ENCODE measurements at regions of chr15 and their contacts with region 1.

Region 1: GRCh38 chr15:59528965-59529402 is 82.6 kb upstream of the GCNT3 start:
- H3K4me3 Mint-ChIP-seq: no peak overlapping the region
- H3K27ac Mint-ChIP-seq: no peak overlapping the region
- H3K4me1 Mint-ChIP-seq: peaks cover 47% of the 10 kb centered on the region
- H3K27me3 Mint-ChIP-seq: no peaks in the 10 kb centered on the region

Region 2: DNA sequence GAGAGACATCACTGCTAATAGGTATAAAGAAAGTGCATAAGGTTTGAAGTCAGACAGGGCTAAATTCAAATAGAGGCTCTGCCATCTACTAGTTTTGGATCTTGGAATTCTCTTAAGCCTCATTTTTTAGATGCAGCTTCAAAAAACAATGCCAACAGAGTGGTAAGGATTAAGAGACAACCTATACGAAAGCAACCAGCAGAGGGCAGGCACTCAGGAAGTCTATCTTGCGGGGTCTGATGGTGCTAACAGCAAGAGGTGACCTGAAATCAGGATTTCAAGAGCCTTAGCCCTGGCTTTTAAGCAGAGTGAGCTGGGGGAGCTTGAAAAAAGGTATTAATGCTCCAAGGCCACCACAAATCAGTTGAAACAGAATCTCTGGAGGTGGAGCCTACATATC is 281.6 kb before region 1 on chr15:
- intact Hi-C with region 1: loop called (anchors 1 kb)
- H3K4me3 Mint-ChIP-seq: no peak overlapping the region
- H3K27ac Mint-ChIP-seq: no peak overlapping the region
- H3K4me1 Mint-ChIP-seq: peaks cover 5% of the 10 kb centered on the region
- H3K27me3 Mint-ChIP-seq: no peaks in the 10 kb centered on the region

Region 3: DNA sequence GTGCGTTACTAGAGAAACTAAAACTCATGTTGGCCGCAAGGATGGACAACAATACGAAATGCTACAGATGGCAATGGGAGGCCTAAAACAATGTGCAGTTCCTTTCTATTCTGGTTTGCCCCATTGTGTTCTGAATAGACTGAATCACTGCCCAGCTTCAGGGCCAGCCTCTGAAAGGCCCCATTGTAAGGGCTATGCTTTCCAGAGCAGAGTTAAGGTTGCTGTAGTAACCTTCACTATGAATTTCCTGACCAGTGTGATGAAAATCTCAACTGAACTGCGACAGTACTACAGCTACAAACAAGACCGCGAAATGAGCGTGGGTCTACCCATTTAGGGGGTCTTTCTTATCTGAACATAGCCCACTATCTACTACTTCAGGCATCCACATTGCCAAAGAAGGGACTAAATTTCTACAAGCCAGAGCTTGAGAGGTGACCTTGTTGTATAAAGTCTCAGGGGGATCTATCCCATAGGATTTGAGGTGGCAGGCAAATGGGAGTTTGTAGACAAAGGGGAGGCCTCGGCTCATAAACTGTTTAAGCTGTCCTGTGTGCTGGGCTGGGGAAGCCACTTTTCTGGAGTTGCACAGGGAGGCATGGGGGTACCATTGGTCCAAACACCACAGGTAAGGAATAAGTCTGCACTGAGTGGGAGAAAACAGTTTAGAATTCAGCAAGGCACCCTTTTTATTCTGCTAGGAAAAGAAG is 236.4 kb before region 1 on chr15:
- intact Hi-C with region 1: no loop called
- H3K4me3 Mint-ChIP-seq: no peak overlapping the region
- H3K27ac Mint-ChIP-seq: no peak overlapping the region
- H3K4me1 Mint-ChIP-seq: peaks cover 60% of the 10 kb centered on the region
- H3K27me3 Mint-ChIP-seq: no peaks in the 10 kb centered on the region

Region 4: GRCh38 chr15:59473226-59473625 is 55.8 kb before region 1 on chr15:
- intact Hi-C with region 1: no loop called
- H3K4me3 Mint-ChIP-seq: no peak overlapping the region
- H3K27ac Mint-ChIP-seq: no peak overlapping the region
- H3K4me1 Mint-ChIP-seq: peaks cover 15% of the 10 kb centered on the region
- H3K27me3 Mint-ChIP-seq: no peaks in the 10 kb centered on the region

Region 5: GRCh38 chr15:59562448-59563186 is 33.6 kb after region 1 on chr15:
- intact Hi-C with region 1: loop called (anchors 2 kb)
- H3K4me3 Mint-ChIP-seq: no peak overlapping the region
- H3K27ac Mint-ChIP-seq: no peak overlapping the region
- H3K4me1 Mint-ChIP-seq: peaks cover 16% of the 10 kb centered on the region
- H3K27me3 Mint-ChIP-seq: peaks cover 3% of the 10 kb centered on the region

Region 6: DNA sequence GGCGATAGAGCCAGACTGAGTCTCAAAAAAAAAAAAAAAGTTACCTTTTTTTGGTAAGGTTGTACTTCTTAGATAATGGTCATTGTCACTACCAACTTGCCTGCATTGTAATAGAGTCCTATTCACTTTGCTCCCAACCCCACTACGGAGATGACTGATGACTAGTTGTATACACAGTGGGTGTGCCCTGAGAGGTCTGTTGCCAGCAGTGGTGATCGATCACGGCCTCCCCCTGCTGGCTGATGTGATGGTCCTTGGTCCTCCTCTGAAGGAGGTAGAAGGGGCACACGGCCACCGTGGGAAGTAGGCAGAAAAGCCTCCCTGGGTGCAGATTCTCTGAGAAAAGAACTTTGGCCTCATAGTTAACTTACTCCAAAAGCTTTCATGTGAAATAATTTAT is 93.3 kb after region 1 on chr15:
- intact Hi-C with region 1: loop called (anchors 5 kb)
- H3K4me3 Mint-ChIP-seq: no peak overlapping the region
- H3K27ac Mint-ChIP-seq: no peak overlapping the region
- H3K4me1 Mint-ChIP-seq: peaks cover 11% of the 10 kb centered on the region
- H3K27me3 Mint-ChIP-seq: peaks cover 19% of the 10 kb centered on the region

Region 7: DNA sequence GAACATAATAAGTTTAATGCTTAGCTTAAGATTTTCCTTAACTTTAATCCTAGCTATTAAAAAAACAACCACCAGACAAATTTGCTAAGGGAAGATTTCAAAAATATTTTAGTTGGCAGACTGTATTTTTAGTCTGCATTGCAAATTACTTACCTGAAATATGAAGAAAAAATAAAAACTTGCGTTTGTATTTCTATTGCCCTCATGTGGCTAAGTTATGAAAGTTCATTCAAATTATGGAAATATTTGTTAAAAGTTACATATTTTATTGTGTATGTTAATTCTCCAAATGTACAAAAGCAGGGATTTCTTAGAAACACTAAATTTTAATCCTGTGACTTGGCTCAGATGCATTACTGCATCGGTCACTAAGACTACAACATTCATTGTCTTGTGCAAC is 113.4 kb after region 1 on chr15:
- intact Hi-C with region 1: loop called (anchors 5 kb)
- H3K4me3 Mint-ChIP-seq: no peak overlapping the region
- H3K27ac Mint-ChIP-seq: no peak overlapping the region
- H3K4me1 Mint-ChIP-seq: peaks cover 9% of the 10 kb centered on the region
- H3K27me3 Mint-ChIP-seq: no peaks in the 10 kb centered on the region

Region 8: DNA sequence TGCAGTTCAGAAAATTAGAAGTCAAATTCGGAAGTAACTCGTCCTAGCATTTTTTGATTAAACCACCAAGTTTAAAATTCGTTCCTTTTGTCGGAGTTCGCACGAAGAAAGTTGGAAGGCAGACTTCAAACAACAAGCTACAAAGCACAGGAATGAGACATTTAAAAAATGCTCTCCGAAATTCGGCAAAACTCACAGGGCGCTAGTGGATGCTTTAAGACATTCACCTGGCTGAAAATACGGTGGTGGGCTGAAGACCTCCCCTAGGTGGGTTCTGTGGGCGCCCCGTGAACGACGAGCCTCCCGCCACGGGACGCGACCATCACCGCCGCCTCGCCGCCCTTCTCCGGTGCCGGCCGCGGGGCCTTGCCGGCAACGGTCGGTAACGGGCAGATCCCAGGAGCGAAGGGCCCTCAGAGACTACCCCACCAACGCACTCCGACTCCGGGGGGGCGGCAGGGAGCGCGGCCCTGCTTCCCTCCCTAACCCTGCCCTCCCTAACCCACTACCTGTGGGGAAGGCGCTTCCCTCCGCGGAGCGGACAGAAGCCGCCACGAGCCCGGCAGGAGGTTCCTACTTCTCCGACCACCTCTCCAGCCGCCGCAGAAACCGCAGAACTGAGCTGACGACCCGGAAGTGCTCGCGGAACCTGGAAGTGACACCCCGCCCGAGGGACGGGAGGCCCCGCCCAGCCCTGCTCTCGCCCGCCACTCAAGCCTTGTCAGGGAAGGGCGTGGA is 128.1 kb after region 1 on chr15 and contains the start of gene GTF2A2:
- intact Hi-C with region 1: loop called (anchors 5 kb)
- H3K4me3 Mint-ChIP-seq: no peak within 1 kb of the TSS
- H3K27ac Mint-ChIP-seq: no peak within 1 kb of the TSS
- H3K4me1 Mint-ChIP-seq: peaks cover 11% of the 10 kb centered on the region
- H3K27me3 Mint-ChIP-seq: no peaks in the 10 kb centered on the region

Region 9: GRCh38 chr15:59751552-59752413 is 222.8 kb after region 1 on chr15:
- intact Hi-C with region 1: no loop called
- H3K4me3 Mint-ChIP-seq: no peak overlapping the region
- H3K27ac Mint-ChIP-seq: no peak overlapping the region
- H3K4me1 Mint-ChIP-seq: no peaks in the 10 kb centered on the region
- H3K27me3 Mint-ChIP-seq: peaks cover 7% of the 10 kb centered on the region